ENCODE measurements at regions of chr11 and their contacts with region 1.

Region 1: DNA sequence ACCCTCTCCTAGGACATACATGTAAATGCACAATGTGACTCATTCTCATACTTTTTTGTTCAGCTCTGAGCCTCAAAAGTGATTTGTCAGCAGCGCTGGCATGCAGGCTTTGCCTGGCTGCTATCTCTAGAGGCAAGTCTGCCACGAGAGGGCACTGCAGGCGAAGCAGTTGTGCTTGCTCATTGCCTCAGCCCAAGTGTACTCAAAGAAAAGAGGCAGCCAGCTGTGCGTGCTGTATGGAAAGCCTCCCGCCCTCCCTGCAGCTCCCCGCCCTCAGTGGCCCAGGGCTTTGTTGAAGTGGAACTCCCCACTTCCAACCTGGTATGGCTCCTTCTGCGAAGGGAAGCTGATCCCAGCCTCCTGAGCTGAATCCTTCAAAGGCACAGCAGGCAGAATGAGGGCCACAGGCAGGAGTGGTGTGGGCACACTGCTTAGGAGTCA is 16.3 kb downstream of the SDHAF2 start:
- DNase-seq: peak; percentile 84 to 98 (median 94)

Region 2: GRCh38 chr11:61516675-61517572 is 70.7 kb after region 1 on chr11:
- intact Hi-C with region 1: loop called (anchors 2 kb)
- DNase-seq: peak in 30 of 42 donors; percentile 41 to 83 (median 62)

Region 3: GRCh38 chr11:61639816-61640443 is 193.7 kb after region 1 on chr11:
- intact Hi-C with region 1: no loop called
- DNase-seq: no peak